Esophagus muscularis mucosa (tissue), 4 donors: ENCODE measurements at regions of chr7 and their contacts with region 1.

Region 1: DNA sequence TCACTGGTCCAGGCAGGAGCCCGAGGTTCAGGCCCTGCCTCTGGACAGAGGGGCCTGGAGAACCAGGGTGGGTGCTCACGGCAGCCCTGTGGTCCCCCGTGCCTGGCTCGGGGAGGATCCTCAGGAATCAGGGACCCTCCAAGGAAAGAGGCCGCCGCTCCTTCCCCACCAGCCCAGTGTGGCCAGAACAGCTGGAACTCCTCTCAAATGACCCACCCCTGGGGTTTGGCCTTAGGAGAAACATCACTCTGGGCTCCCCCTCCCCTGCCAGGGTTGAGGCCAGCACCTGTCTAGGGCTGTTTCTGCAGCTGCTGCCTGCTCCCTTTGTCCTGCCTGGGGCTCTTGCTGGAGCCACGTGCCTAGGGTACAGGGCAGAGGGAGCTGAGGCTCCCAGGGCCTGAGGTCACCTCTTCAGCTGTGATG is 161.0 kb downstream of the RNF216 start:
- DNase-seq: no peak
- H3K4me3 ChIP-seq: no peak overlapping the region
- H3K27ac ChIP-seq: peak overlapping the region in 3 of 4 donors; percentile 11 to 31 (median 20)
- H3K4me1 ChIP-seq: peaks cover 3 to 13% (median 9%) of the 10 kb centered on the region in 4 donors
- H3K27me3 ChIP-seq: no peaks in the 10 kb centered on the region
- CTCF ChIP-seq: no peak
- EP300 ChIP-seq: no peak
- POLR2A ChIP-seq: no peak

Region 2: DNA sequence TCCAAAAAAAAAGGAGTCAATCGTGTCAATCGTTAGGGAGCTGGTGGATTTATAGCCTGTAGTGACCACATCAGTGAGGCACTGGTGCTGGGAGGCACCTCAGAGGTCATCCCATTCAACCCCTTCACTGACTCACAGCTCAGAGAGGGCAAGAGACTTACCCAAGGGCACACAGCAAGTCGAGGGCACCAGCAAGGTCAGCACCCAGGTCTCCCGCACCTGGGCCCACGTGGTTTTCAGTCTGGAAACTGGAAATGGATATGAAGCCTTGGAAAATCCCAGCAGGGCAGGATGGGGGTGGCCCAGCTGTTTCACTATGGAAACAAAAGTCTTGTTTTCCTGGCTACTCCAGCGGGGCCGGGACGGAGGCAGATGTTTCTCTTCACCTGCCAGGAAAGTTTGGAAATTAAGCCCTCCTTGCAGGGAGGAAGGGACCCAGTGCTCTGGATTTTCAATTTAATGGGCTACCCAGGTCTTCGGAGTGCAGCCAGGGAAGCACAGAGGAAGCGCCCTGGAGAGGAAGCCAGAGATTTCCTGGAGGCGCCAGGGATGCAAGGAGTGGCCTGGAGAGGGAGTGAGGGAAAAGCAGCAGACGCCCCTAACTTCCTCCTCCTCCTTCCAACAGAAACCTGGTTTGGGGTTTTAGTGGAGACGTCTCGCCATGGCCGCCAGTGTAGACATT is 39.6 kb before region 1 on chr7:
- intact Hi-C with region 1: loop called (anchors 5 kb)
- DNase-seq: no peak
- H3K4me3 ChIP-seq: no peak overlapping the region
- H3K27ac ChIP-seq: peak overlapping the region in 1 of 4 donors; percentile 33
- H3K4me1 ChIP-seq: peaks cover 8 to 14% (median 12%) of the 10 kb centered on the region in 4 donors
- H3K27me3 ChIP-seq: no peaks in the 10 kb centered on the region
- CTCF ChIP-seq: no peak
- EP300 ChIP-seq: no peak
- POLR2A ChIP-seq: no peak